Head of caudate nucleus (tissue), 42 donors: ENCODE measurements at regions of chr1 and their contacts with region 1.

Region 1: DNA sequence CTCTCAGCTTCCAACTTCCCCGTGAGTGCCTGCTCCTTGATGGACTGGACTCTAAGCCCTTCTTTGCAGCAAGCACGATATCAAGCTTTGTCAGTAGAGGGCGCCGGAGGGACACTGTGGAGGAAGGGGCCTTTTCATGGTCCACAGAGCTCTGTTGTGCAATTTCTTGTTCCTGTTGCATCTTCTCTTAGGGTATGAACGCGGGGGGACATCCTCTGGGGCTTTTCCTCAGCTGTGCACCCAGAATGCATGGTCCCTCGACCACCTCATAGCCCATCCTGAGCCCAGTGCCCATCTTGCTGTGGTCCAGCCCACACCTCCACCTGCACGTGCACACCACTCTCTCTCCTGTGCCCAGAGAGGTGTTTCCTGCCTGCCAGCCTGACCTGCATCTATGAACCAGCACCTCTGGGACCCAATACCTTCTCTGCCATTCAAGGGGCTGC is 556.8 kb downstream of the PTPRU start:
- DNase-seq: peak; percentile 51 to 91 (median 80)

Region 2: DNA sequence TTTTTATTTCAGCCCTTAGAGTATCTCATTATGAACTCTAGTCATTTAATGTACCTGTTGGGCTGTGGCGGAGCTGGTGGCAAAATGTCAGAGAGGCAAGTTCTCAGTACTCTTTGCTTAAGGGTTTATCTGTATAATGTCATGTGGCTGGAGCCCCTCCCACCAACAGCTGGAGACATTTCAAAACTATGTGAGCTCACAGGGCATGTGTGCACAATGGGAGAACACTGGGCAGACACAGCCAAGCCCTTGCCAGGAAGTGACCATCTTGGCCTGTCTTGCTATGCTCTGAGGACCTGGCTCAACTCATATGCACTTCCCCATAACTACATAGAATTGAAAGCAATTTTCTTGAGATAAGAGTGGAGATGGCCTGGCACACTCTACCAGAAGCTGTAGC is 260.4 kb before region 1 on chr1:
- intact Hi-C with region 1: no loop called
- DNase-seq: peak in 2 of 42 donors; percentile 8 to 13

Region 3: GRCh38 chr1:29758781-29759499 is 34.2 kb before region 1 on chr1:
- intact Hi-C with region 1: no loop called
- DNase-seq: peak in 4 of 42 donors; percentile 5 to 14 (median 12)

Region 4: DNA sequence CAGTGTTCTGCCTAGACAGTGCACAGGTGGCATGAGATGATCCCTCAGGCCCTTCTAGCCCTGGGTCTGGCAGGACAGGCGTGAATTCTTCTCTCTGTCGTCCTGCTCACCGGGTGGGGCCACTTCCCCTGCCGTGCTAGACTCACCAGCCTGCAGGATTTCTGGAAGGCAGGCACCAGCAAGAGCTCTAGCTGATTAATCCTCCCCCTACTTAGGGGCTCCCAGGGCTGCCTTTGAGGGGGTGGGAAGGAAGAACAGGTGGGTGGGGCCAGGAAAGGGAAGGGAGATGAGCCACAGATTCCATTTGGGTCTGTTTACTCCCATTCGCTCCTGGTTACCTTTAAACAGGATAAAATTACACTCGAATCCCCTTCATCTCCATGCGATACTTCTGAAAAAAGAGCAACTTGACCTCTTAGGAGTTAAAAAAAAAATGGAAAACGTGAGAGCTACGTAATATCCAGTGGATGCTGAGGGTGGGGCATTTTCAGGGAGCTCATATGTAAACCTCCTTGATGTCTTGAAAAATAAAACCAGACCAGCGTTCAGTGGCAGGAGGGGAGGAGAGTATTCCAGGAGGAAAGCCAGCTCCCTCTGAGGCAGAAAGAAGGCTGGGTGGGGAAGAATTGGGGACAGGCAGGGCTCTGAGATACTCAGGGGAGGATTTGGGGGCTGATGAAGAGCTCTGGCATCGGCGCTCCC is 108.7 kb after region 1 on chr1:
- intact Hi-C with region 1: no loop called
- DNase-seq: no peak

Region 5: DNA sequence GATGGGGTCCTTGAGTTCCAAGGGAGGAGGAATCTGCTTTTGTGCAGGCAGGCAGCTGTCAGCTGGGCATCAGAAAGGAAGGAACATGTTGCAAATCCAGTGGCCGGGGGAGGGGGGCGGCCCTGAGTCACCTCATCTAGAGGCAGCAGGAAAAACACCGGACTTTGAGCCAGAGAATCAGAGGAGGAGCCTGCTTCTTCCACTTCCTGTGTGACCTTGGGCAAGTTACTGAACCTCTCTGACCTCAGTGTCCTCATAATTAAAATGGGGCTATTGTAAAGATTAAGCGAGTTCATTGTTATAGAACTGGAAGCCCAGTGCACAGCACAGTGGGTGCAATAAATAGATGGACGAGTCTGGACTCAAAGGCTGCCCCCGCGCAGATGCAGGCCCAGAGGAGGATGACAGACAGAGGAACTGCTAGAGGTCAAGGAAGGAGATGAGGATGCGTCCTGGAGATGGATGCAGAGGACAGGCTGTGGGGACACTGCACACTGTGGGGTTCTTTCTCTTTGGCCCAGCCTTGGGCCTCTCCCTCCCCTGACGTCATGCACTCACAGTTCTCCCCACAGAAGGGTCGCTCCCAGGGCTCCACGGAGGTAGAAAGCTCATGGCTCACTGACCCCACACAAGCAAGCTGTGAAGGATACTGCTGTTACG is 216.0 kb after region 1 on chr1:
- intact Hi-C with region 1: no loop called
- DNase-seq: no peak

Region 6: DNA sequence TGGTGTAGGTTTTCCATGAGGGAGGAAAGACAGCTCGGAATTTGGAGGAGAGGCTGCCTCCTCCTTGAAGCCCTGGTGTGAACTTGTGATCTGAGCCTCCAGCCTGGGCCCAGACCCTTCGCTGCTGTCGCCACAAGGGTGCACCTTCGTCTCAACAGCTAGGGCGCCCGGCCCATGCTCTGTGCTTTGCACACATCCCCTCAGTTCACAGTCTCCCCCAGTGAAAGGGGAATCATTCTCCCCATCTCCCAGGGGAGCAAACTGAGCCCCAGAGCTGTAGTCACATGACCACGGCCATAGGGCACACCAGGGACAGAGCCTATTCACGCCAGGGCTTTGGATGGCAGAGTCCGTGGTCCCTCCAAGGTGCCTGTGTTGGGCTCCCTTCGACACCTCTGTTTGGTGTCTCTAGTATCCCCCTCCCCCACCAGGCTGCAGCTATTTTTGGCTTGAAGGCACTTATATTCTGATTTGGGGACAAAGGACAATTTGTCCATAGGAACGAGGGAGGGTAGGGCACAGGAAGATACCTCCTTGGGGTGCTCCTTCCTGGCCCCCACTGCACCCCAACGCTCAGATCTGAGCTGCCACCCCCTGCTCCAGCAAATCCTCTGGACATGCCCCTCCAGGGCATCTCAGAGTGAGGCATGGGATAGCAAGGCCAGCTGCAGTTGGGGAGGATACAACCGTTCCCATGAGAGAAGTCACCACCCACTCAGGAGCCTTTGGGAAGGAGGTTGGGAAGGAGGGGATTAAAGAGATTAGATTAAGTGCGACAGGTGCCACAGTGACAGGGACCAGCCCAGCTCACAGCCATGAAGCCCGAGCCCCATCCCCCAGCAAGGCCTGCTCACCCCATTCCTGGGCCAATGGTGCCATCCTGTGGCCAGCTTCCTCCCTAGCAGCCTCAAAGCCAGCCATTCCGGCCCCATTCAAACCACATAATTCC is 914.6 kb after region 1 on chr1:
- intact Hi-C with region 1: loop called (anchors 10 kb)
- DNase-seq: peak; percentile 74 to 95 (median 87)